ENCODE measurements at regions of chr6 and their contacts with region 1.

Region 1: GRCh38 chr6:10451394-10451793 is 36.5 kb upstream of the TFAP2A start:
- DNase-seq: no peak
- H3K27ac ChIP-seq: peak overlapping the region; percentile 91
- CTCF ChIP-seq: no peak

Region 2: GRCh38 chr6:10434692-10435376 is 16.6 kb before region 1 on chr6:
- CTCF ChIA-PET with region 1: interaction called, 13 read pairs
- POLR2A ChIA-PET with region 1: no interaction called
- DNase-seq: peak; percentile 13
- H3K27ac ChIP-seq: peak overlapping the region; percentile 63; the same call in 1 of the 2 replicates
- CTCF ChIP-seq: peak; percentile 71

Measured in RWPE1 (cell line).